ENCODE measurements at regions of chr19 and their contacts with region 1.

Region 1: DNA sequence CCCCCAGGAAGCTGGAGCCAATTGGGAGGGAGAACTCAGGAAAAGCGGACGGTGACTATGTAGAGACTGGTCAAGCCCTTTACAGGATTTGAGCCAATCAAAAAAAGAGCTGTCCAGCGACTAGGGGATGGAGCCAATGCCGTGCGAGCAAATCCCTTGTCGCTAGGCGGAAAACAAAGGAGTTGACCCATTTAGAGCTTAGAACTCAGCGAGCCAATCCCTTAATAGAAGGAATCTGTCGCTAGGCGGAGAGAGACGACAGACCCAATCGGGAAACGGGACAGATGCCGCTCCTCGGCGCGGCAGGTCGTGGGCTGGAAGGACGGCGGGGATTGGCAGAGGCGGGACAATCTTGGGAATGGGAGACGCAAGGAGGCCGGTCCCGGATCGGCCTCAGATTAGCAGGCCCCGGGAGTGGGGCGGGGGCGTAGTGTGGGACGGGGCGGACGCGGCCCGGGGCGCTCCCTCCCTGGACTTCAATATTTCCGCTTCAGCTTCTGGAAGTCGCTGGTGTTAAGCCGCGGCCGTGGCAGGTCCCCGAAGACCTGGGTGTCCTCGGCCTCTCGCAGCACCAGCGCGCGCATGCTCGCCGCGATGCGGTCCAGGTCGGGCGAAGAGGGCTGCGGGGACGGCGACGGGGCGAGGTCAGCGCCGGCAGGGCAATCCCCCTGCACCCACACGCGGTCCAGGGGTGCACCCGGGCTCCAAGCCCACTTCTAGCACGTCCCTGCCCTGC is 2.2 kb upstream of the PNKP start:
- DNase-seq: peak; percentile 97
- H3K4me3 Mint-ChIP-seq: no peak overlapping the region
- H3K27ac Mint-ChIP-seq: no peak overlapping the region
- H3K4me1 Mint-ChIP-seq: peaks cover 34% of the 10 kb centered on the region
- H3K27me3 Mint-ChIP-seq: no peaks in the 10 kb centered on the region
- CTCF ChIP-seq: no peak

Region 2: GRCh38 chr19:49746206-49747091 is 123.2 kb before region 1 on chr19:
- CTCF ChIA-PET with region 1: no interaction called
- intact Hi-C with region 1: no loop called
- DNase-seq: no peak
- H3K4me3 Mint-ChIP-seq: no peak overlapping the region
- H3K27ac Mint-ChIP-seq: no peak overlapping the region
- H3K4me1 Mint-ChIP-seq: no peaks in the 10 kb centered on the region
- H3K27me3 Mint-ChIP-seq: no peaks in the 10 kb centered on the region
- CTCF ChIP-seq: no peak

Region 3: GRCh38 chr19:49929611-49930482 is 60.2 kb after region 1 on chr19:
- CTCF ChIA-PET with region 1: interaction called, 10 read pairs
- intact Hi-C with region 1: no loop called
- DNase-seq: peak; percentile 94
- H3K4me3 Mint-ChIP-seq: peak overlapping the region; percentile 83
- H3K27ac Mint-ChIP-seq: peak overlapping the region; percentile 87
- H3K4me1 Mint-ChIP-seq: peaks cover 36% of the 10 kb centered on the region
- H3K27me3 Mint-ChIP-seq: no peaks in the 10 kb centered on the region
- CTCF ChIP-seq: no peak